Activated CD4-positive, alpha-beta memory T cell treated with anti-CD3 and anti-CD28 coated beads for 36 hours (primary cell): ENCODE measurements at regions of chr15 and their contacts with region 1.

Region 1: GRCh38 chr15:80989518-80990478 is at the start of gene MESD:
- DNase-seq: peak; percentile 99
- H3K4me3 Mint-ChIP-seq: peak within 1 kb of the TSS; percentile 98
- H3K27ac Mint-ChIP-seq: peak within 1 kb of the TSS; percentile 93
- H3K4me1 Mint-ChIP-seq: peaks cover 51% of the 10 kb centered on the region
- H3K27me3 Mint-ChIP-seq: no peaks in the 10 kb centered on the region
- total RNA-seq, gene MESD: 20.0 to 20.5 TPM

Region 2: GRCh38 chr15:80674245-80674614 is 315.6 kb before region 1 on chr15:
- CTCF ChIA-PET with region 1: no interaction called
- POLR2A ChIA-PET with region 1: no interaction called
- intact Hi-C with region 1: no loop called
- DNase-seq: no peak
- H3K4me3 Mint-ChIP-seq: no peak overlapping the region
- H3K27ac Mint-ChIP-seq: no peak overlapping the region
- H3K4me1 Mint-ChIP-seq: peaks cover under 1% of the 10 kb centered on the region
- H3K27me3 Mint-ChIP-seq: peaks cover 20% of the 10 kb centered on the region

Region 3: DNA sequence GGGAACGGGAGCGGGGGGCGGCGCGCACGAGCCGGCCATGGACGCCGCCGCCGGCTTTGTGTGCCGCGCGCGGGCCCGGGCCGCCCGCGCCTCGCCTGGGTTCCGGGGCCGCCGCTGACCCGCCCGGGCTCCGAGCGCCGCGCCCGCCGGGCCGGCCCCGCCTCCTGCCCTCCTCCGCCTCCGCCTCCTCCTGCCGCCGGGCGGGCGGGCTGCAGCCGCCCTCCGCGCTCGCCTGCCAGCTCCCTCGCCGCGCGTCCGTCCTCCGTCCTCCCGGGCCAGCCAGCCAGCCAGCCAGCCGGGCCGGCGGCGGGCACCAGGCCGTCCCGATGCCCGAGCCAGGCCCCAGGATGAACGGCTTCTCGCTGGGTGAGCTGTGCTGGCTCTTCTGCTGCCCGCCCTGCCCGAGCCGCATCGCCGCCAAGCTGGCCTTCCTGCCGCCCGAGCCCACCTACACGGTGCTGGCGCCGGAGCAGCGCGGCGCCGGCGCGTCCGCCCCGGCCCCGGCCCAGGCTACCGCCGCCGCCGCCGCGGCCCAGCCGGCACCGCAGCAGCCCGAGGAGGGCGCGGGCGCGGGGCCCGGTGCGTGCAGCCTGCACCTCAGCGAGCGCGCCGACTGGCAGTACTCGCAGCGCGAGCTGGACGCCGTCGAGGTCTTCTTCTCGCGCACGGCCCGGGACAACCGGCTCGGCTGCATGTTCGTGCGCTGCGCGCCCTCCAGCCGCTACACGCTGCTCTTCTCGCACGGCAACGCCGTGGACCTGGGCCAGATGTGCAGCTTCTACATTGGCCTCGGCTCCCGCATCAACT is 294.5 kb before region 1 on chr15 and contains the start of gene ABHD17C:
- CTCF ChIA-PET with region 1: no interaction called
- POLR2A ChIA-PET with region 1: no interaction called
- intact Hi-C with region 1: loop called (anchors 5 kb)
- DNase-seq: peak; percentile 55
- H3K4me3 Mint-ChIP-seq: peak within 1 kb of the TSS; percentile 86
- H3K27ac Mint-ChIP-seq: peak within 1 kb of the TSS; percentile 71
- H3K4me1 Mint-ChIP-seq: peaks cover 21% of the 10 kb centered on the region
- H3K27me3 Mint-ChIP-seq: peaks cover 3% of the 10 kb centered on the region
- total RNA-seq, gene ABHD17C: 6.1 to 9.0 TPM

Region 4: GRCh38 chr15:81000624-81001151 is 10.9 kb after region 1 on chr15 and contains the start of gene TLNRD1:
- CTCF ChIA-PET with region 1: interaction called, 4 read pairs
- POLR2A ChIA-PET with region 1: interaction called, 12 read pairs
- intact Hi-C with region 1: loop called (anchors 1 kb)
- DNase-seq: peak; percentile 92
- H3K4me3 Mint-ChIP-seq: peak within 1 kb of the TSS; percentile 97
- H3K27ac Mint-ChIP-seq: peak within 1 kb of the TSS; percentile 99
- H3K4me1 Mint-ChIP-seq: peaks cover 42% of the 10 kb centered on the region
- H3K27me3 Mint-ChIP-seq: no peaks in the 10 kb centered on the region
- total RNA-seq, gene TLNRD1: 23.5 to 25.4 TPM

Region 5: DNA sequence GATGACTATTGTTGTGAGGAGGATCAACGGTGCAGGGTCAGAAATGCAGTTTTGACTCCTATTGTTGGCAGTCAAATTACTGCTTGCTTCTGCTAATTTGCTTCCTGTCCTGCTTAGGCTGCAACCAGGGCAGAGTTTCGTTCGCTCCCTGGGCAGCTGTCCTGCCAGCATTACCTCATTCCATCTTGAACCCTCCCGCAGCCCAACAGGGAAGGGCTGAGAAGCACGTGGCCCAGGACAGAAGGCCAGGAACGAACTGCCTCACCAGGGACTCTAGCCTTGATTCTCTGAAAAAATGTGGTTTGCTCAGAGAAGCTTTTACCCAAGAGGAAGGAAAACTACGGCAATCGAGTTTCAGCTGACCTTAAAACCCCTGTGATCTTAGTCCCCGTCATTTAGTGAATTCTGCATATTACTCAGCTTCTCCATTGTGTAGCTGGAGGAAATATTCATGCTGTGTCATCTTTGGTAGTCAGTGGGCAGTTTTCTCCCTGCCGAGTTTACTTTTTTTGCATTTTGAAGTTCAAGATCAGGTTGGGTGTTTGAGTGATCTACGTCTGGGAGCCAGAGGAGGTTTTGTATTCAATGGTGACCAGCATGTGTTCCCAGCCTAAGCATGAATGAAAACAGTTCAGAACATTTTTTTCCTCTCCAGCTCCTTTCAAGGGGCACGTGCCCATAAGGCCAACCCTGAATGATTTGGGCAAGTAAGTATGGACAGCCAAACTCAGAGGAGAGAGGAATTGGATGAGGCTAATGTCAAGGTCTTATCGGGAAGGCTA is 33.9 kb after region 1 on chr15:
- CTCF ChIA-PET with region 1: no interaction called
- POLR2A ChIA-PET with region 1: no interaction called
- intact Hi-C with region 1: loop called (anchors 5 kb)
- DNase-seq: peak; percentile 55
- H3K4me3 Mint-ChIP-seq: peak overlapping the region; percentile 48
- H3K27ac Mint-ChIP-seq: peak overlapping the region; percentile 95
- H3K4me1 Mint-ChIP-seq: peaks cover 35% of the 10 kb centered on the region
- H3K27me3 Mint-ChIP-seq: no peaks in the 10 kb centered on the region

Region 6: GRCh38 chr15:81029414-81030300 is 39.9 kb after region 1 on chr15:
- CTCF ChIA-PET with region 1: no interaction called
- POLR2A ChIA-PET with region 1: no interaction called
- intact Hi-C with region 1: loop called (anchors 5 kb)
- DNase-seq: no peak
- H3K4me3 Mint-ChIP-seq: no peak overlapping the region
- H3K27ac Mint-ChIP-seq: no peak overlapping the region
- H3K4me1 Mint-ChIP-seq: peaks cover 27% of the 10 kb centered on the region
- H3K27me3 Mint-ChIP-seq: no peaks in the 10 kb centered on the region

Region 7: DNA sequence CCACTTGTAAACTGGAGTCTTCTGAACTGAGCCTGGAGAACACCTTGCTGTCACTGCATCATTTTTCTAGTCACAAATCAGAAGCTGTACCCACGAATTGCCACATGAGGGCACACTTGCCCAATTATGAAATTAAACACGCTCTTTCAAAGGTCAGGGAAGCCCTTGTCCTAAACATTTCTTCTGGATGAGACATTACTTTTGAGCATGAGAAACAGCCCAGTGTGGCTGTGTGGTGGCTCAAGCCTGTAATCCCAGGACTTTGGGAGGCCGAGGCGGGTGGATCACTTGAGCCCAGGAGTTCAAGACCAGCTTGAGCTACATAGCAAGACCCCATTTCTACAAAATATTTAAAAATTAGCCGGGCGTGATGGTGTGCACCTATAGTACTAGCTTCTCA is 116.8 kb after region 1 on chr15:
- CTCF ChIA-PET with region 1: interaction called, 11 read pairs
- POLR2A ChIA-PET with region 1: no interaction called
- intact Hi-C with region 1: no loop called
- DNase-seq: peak; percentile 59
- H3K4me3 Mint-ChIP-seq: no peak overlapping the region
- H3K27ac Mint-ChIP-seq: no peak overlapping the region
- H3K4me1 Mint-ChIP-seq: peaks cover 3% of the 10 kb centered on the region
- H3K27me3 Mint-ChIP-seq: peaks cover 20% of the 10 kb centered on the region